Breast epithelium (tissue), 4 donors: ENCODE measurements at regions of chr11 and their contacts with region 1.

Region 1: DNA sequence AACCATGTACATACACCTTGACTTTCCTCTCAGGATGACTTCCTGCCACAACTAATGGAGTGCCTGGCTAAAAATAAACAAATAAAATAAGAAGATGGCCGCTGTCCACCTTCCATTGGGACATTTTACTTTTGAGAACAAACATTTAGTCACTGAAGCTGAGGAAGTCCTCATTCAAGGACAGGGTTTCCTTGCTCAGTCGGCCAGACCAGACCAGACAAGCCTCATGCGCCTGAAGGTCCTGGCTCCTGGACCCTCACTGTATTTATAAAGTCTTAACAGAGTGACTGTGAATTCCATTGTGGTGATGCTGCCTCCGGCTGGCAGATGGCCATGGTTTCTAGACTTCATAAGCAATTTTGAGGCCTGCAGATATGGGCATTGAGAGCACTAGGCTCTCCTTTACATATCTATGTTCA is 114.5 kb downstream of the MAML2 start:
- DNase-seq: peak in 1 of 2 donors; percentile 88
- H3K4me3 ChIP-seq: no peak overlapping the region
- H3K27ac ChIP-seq: peak overlapping the region; percentile 79 to 89
- H3K4me1 ChIP-seq: no peaks in the 10 kb centered on the region
- H3K27me3 ChIP-seq: no peaks in the 10 kb centered on the region
- CTCF ChIP-seq: no peak
- POLR2A ChIP-seq: no peak

Region 2: GRCh38 chr11:94593030-94593429 is 1635.5 kb before region 1 on chr11:
- intact Hi-C with region 1: loop called (anchors 5 kb)
- DNase-seq: no peak
- H3K4me3 ChIP-seq: no peak overlapping the region
- H3K27ac ChIP-seq: no peak overlapping the region
- H3K4me1 ChIP-seq: no peaks in the 10 kb centered on the region
- H3K27me3 ChIP-seq: no peaks in the 10 kb centered on the region
- CTCF ChIP-seq: no peak
- POLR2A ChIP-seq: no peak

Region 3: GRCh38 chr11:96098514-96099241 is 129.8 kb before region 1 on chr11:
- intact Hi-C with region 1: no loop called
- DNase-seq: peak in 1 of 2 donors; percentile 65
- H3K4me3 ChIP-seq: peak overlapping the region in 1 of 3 donors; percentile 34
- H3K27ac ChIP-seq: peak overlapping the region; percentile 95
- H3K4me1 ChIP-seq: peaks cover 17 to 48% of the 10 kb centered on the region in 2 donors
- H3K27me3 ChIP-seq: no peaks in the 10 kb centered on the region
- CTCF ChIP-seq: no peak
- POLR2A ChIP-seq: no peak

Region 4: DNA sequence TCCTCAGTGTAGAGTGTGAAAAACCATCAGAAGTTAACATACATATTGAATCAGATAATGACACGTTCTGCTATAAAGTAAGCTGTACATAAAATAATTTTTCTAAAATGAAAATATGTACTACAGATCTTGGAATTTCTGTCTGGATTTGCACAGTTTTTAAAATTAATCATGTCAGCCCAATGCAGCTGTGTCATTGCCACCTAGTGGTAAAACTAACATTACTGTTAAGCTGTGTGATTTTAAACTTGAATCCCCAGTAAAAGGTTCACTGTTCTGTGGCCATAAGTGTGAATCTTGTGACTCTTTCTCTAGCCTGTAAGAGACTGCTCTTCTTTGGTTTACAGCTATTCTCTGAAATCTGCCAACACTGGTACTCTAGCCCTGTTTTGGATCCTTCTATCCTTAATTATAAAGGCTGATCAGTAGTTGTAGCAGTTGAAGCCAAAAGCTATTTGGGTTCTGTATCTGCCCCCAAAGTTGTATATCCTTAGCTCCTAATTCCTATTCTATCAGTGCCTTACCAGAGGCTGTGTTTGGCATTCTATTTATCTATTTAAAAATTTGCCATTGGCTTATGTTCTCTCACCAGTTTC is 165.4 kb after region 1 on chr11:
- intact Hi-C with region 1: no loop called
- DNase-seq: no peak
- H3K4me3 ChIP-seq: no peak overlapping the region
- H3K27ac ChIP-seq: no peak overlapping the region
- H3K4me1 ChIP-seq: no peaks in the 10 kb centered on the region
- H3K27me3 ChIP-seq: no peaks in the 10 kb centered on the region
- CTCF ChIP-seq: peak; percentile 45 to 70 (median 64)
- POLR2A ChIP-seq: no peak

Region 5: DNA sequence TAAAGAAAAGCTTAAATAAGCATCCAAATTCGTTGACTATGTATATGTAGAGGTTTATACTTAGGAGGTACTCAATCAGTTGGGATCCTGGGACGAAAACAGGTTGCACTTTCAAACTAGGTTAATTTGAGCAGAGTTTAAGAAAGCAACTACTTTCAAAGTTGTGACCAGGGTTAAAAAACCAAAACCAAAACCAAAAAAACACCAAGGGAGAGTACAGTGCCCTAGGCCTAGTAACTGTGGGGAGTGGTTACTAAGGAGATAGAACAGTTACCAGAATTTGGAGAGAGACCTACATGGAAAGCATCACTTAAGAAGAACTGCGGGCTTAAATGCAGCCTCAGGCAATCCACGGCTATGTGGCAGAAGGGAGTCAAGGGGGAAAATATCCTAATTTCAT is 309.6 kb after region 1 on chr11:
- intact Hi-C with region 1: no loop called
- DNase-seq: no peak
- H3K4me3 ChIP-seq: no peak overlapping the region
- H3K27ac ChIP-seq: no peak overlapping the region
- H3K4me1 ChIP-seq: no peaks in the 10 kb centered on the region
- H3K27me3 ChIP-seq: no peaks in the 10 kb centered on the region
- CTCF ChIP-seq: no peak
- POLR2A ChIP-seq: no peak